ENCODE measurements at regions of chr15 and their contacts with region 1.

Region 1: DNA sequence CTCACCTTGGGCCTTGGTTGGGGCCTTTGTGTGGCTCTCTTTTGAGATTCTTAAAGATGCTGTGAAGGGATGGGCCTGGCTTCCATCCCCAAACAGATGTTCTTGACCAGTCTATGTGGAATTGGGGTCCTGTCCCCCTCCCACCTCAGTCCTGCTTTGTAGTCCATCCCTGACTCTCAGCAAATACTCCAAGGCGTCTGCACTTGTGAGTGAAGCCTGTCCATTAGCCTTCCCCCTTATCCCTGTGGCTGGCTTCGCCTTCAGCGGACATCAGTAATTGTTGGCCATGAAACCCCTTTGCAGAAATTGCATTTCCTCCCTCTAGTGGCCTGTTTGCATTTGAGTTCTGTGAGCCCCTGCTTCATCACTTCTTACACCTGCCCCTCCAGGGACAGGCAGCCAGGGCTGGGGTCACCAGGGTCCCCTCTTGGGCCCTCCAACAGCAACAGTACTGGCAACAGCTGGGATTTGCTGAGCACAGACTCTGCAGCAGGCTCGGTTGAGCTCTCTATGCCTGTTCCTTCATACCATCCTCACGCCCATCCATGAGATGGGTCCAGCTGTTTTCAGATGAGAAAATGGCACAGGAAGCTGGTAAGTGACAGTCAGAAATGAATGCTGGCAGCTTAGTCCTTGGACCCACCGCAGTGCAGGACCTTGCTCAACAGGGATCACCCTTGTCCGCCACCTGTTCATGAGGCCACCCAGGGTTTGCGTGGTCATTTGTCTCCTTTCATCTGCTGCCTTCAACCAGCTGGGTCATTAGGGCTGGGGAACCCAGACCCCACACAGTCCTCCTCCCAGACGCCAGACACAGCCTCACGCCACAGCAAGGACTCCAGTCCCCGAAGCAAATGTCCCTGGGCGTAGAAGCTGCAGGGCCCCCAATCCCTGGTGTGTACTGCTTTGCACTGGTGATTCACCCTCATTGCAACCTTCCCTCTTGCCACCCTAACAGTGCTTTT is 8.9 kb upstream of the LRRK1 start:
- DNase-seq: no peak
- H3K4me3 ChIP-seq: no peak overlapping the region
- H3K27ac ChIP-seq: no peak overlapping the region
- H3K4me1 ChIP-seq: peaks cover 0 to 8% of the 10 kb centered on the region in 2 donors
- H3K27me3 ChIP-seq: no peaks in the 10 kb centered on the region
- CTCF ChIP-seq: no peak
- POLR2A ChIP-seq: no peak

Region 2: GRCh38 chr15:101000271-101000681 is 90.0 kb after region 1 on chr15:
- intact Hi-C with region 1: loop called (anchors 5 kb)
- DNase-seq: no peak
- H3K4me3 ChIP-seq: no peak overlapping the region
- H3K27ac ChIP-seq: no peak overlapping the region
- H3K4me1 ChIP-seq: peaks cover 0 to 2% of the 10 kb centered on the region in 2 donors
- H3K27me3 ChIP-seq: no peaks in the 10 kb centered on the region
- CTCF ChIP-seq: no peak
- POLR2A ChIP-seq: no peak

Region 3: GRCh38 chr15:101684384-101684783 is 774.1 kb after region 1 on chr15:
- intact Hi-C with region 1: no loop called
- DNase-seq: no peak
- H3K4me3 ChIP-seq: no peak overlapping the region
- H3K27ac ChIP-seq: no peak overlapping the region
- H3K4me1 ChIP-seq: no peaks in the 10 kb centered on the region
- H3K27me3 ChIP-seq: no peaks in the 10 kb centered on the region
- CTCF ChIP-seq: no peak
- POLR2A ChIP-seq: no peak